A549 (cell line): ENCODE measurements at regions of chr12 and their contacts with region 1.

Region 1: GRCh38 chr12:53344824-53345485 is 8.8 kb upstream of the SP7 start:
- DNase-seq: peak; percentile 68 to 76
- ATAC-seq: peak; percentile 87 to 88
- H3K4me3 ChIP-seq: peak overlapping the region; percentile 64
- H3K27ac ChIP-seq: peak overlapping the region; percentile 81 to 93
- H3K4me1 ChIP-seq: peaks cover 9% of the 10 kb centered on the region; the same call in 2 of the 3 replicates
- CTCF ChIP-seq: peak; percentile 74
- EP300 ChIP-seq: no peak
- POLR2A ChIP-seq: peak; percentile 59
- RAD21 ChIP-seq: peak; percentile 74 to 79

Region 2: GRCh38 chr12:53365245-53365904 is 20.4 kb after region 1 on chr12:
- CTCF ChIA-PET with region 1: interaction called, 10 read pairs
- POLR2A ChIA-PET with region 1: no interaction called
- DNase-seq: no peak
- ATAC-seq: peak; percentile 55 to 76; a peak in 5 of 6 replicates
- H3K4me3 ChIP-seq: no peak overlapping the region
- H3K27ac ChIP-seq: peak overlapping the region in 1 of 2 experiments; percentile 73; a peak in 3 of 6 replicates
- H3K4me1 ChIP-seq: peaks cover 24% of the 10 kb centered on the region; the same call in 2 of the 3 replicates
- CTCF ChIP-seq: no peak
- EP300 ChIP-seq: no peak
- POLR2A ChIP-seq: no peak
- RAD21 ChIP-seq: no peak

Region 3: GRCh38 chr12:53391729-53392128 is 46.8 kb after region 1 on chr12:
- CTCF ChIA-PET with region 1: interaction called, 199 read pairs
- POLR2A ChIA-PET with region 1: no interaction called
- DNase-seq: no peak
- ATAC-seq: no peak
- H3K4me3 ChIP-seq: no peak overlapping the region
- H3K27ac ChIP-seq: no peak overlapping the region
- H3K4me1 ChIP-seq: peaks cover 32% of the 10 kb centered on the region; the same call in 2 of the 3 replicates
- CTCF ChIP-seq: no peak
- EP300 ChIP-seq: no peak
- POLR2A ChIP-seq: no peak
- RAD21 ChIP-seq: no peak

Region 4: GRCh38 chr12:53441040-53441833 is 96.3 kb after region 1 on chr12 and contains the start of gene PRR13:
- CTCF ChIA-PET with region 1: interaction called, 4 read pairs
- POLR2A ChIA-PET with region 1: interaction called, 11 read pairs
- DNase-seq: peak; percentile 99 to 100
- ATAC-seq: peak; percentile 96
- H3K4me3 ChIP-seq: peak within 1 kb of the TSS; percentile 71
- H3K27ac ChIP-seq: peak within 1 kb of the TSS; percentile 91 to 93
- H3K4me1 ChIP-seq: peaks cover 26% of the 10 kb centered on the region
- CTCF ChIP-seq: 0 out of 3 replicates have a peak, but pooled peaks have one; percentile 8
- EP300 ChIP-seq: no peak
- POLR2A ChIP-seq: peak; percentile 95
- RAD21 ChIP-seq: no peak
- polyA plus RNA-seq, gene PRR13: 203 and 257 TPM in 2 replicates

Region 5: GRCh38 chr12:53508534-53509199 is 163.7 kb after region 1 on chr12:
- CTCF ChIA-PET with region 1: interaction called, 19 read pairs
- POLR2A ChIA-PET with region 1: no interaction called
- DNase-seq: peak; percentile 77 to 85
- ATAC-seq: peak; percentile 85 to 93
- H3K4me3 ChIP-seq: no peak overlapping the region
- H3K27ac ChIP-seq: peak overlapping the region in 1 of 2 experiments; percentile 42; a peak in 1 of 6 replicates
- H3K4me1 ChIP-seq: peaks cover 9% of the 10 kb centered on the region
- CTCF ChIP-seq: peak; percentile 91
- EP300 ChIP-seq: no peak
- POLR2A ChIP-seq: no peak
- RAD21 ChIP-seq: peak; percentile 91 to 98